Transverse colon (tissue), 4 donors: ENCODE measurements at regions of chr22 and their contacts with region 1.

Region 1: GRCh38 chr22:30586414-30586813 is 5.3 kb downstream of the PES1 start:
- DNase-seq: no peak
- H3K4me3 ChIP-seq: no peak overlapping the region
- H3K27ac ChIP-seq: no peak overlapping the region
- H3K4me1 ChIP-seq: peaks cover 0 to 13% (median 10%) of the 10 kb centered on the region in 4 donors
- H3K27me3 ChIP-seq: no peaks in the 10 kb centered on the region
- CTCF ChIP-seq: no peak
- EP300 ChIP-seq: no peak
- POLR2A ChIP-seq: no peak

Region 2: GRCh38 chr22:30459181-30460052 is 127.0 kb before region 1 on chr22:
- in situ Hi-C with region 1: no loop called
- intact Hi-C with region 1: no loop called
- DNase-seq: no peak
- H3K4me3 ChIP-seq: no peak overlapping the region
- H3K27ac ChIP-seq: no peak overlapping the region
- H3K4me1 ChIP-seq: no peaks in the 10 kb centered on the region
- H3K27me3 ChIP-seq: no peaks in the 10 kb centered on the region
- CTCF ChIP-seq: no peak
- EP300 ChIP-seq: no peak
- POLR2A ChIP-seq: no peak

Region 3: DNA sequence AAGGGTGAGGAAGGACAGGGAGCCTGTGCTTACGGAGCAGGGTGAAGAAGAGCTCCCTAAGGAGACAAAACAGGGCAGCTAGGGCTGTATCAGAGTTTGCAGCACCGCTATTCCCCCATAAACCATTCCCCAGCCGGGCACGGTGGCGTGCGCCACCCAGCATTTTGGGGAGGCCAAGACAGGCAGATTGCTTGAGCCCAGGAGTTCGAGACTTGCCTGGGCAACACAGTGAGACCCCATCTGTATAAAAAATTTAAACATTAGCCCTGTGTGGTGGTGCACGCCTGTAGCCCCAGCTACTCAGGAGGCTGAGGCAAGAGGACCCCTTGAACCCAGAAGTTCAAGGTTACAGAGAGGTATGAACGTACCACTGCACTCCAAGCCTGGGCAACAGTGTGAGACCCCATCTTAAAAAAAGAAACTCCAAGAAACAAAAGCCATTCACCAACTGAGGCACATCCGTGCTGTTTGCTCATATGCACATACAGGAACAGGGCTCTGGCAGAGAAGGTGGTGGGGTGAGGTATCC is 16.7 kb before region 1 on chr22:
- in situ Hi-C with region 1: no loop called
- intact Hi-C with region 1: loop called (anchors 1 kb)
- DNase-seq: no peak
- H3K4me3 ChIP-seq: no peak overlapping the region
- H3K27ac ChIP-seq: no peak overlapping the region
- H3K4me1 ChIP-seq: peaks cover under 1 to 33% (median 22%) of the 10 kb centered on the region in 4 donors
- H3K27me3 ChIP-seq: no peaks in the 10 kb centered on the region
- CTCF ChIP-seq: no peak
- EP300 ChIP-seq: no peak
- POLR2A ChIP-seq: no peak